CD4-positive, alpha-beta memory T cell (primary cell): ENCODE measurements at regions of chr5 and their contacts with region 1.

Region 1: DNA sequence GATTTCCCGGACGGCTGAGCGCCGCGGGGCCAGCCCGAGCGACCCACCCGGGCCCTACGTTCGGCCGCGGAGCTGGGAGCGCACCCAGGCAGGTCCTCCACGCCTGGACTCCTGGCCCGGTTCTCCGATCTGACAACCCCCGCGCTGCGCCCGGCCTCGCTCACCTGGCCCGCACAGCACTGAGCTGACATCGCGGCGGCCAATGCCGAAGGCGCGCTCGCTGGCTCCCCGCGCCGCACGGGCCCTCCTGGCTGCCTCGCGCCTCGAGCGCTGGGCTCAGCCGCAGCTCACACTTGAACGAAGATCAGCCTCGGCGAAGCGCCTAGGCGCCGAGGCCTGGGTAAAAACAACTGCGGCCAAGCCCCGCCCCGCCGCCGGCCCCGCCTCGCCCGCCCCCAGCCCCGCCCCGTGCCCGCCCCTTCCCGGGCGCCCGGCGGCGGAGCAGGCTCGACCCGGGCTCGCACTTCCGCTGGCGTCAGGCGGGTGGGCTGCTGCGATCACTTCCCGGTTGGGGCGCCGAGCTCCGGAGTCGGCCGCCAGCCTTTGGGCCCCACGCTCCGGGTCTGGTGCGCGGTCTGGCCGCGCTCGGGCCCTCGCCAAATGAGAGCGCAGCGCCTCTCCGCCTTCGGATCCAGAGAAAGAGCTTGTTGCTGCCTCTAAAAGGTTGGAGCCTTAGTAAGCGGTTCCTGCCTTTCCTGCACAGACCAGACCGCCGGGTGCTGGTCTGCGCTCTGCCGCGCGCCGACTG is at the start of gene SERINC5:
- DNase-seq: peak; percentile 82 to 88 (median 84)
- H3K4me3 ChIP-seq: peak within 1 kb of the TSS; percentile 73 to 80
- H3K4me3 Mint-ChIP-seq: peak within 1 kb of the TSS; percentile 92 to 100 (median 96)
- H3K27ac ChIP-seq: peak within 1 kb of the TSS; percentile 92
- H3K27ac Mint-ChIP-seq: peak within 1 kb of the TSS; percentile 88 to 99 (median 96)
- H3K4me1 ChIP-seq: peaks cover 40% of the 10 kb centered on the region
- H3K4me1 Mint-ChIP-seq: peaks cover 30 to 60% (median 50%) of the 10 kb centered on the region in 4 donors
- H3K27me3 ChIP-seq: no peaks in the 10 kb centered on the region
- H3K27me3 Mint-ChIP-seq: no peaks in the 10 kb centered on the region
- total RNA-seq, gene SERINC5: 153 to 165 TPM

Region 2: DNA sequence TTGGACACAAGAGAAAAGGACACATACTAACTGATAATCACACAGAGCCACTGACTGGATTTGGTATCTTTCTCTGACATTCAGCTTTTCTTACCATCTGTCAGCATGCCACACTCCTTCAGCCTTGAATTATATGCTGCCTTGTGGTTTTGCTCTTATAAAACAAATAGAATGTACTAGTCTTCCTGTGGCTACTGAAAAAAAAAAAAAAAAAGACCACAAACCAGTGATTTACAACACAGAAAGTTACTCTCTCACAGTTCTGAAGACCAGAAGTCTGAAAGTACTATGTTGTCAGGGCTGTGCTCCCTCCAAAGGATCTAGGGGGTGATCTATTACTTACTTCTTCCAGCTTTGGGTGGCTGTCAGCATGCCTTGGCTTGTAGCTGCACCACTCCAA is 138.5 kb before region 1 on chr5:
- CTCF ChIA-PET with region 1: no interaction called
- POLR2A ChIA-PET with region 1: interaction called, 32 read pairs
- intact Hi-C with region 1: no loop called
- DNase-seq: no peak
- H3K4me3 ChIP-seq: no peak overlapping the region
- H3K4me3 Mint-ChIP-seq: peak overlapping the region in 5 of 8 donors; percentile 25 to 76 (median 43)
- H3K27ac ChIP-seq: no peak overlapping the region
- H3K27ac Mint-ChIP-seq: peak overlapping the region in 5 of 7 donors; percentile 24 to 81 (median 65)
- H3K4me1 ChIP-seq: peaks cover 31% of the 10 kb centered on the region
- H3K4me1 Mint-ChIP-seq: peaks cover 47 to 62% (median 56%) of the 10 kb centered on the region in 4 donors
- H3K27me3 ChIP-seq: no peaks in the 10 kb centered on the region
- H3K27me3 Mint-ChIP-seq: no peaks in the 10 kb centered on the region

Region 3: DNA sequence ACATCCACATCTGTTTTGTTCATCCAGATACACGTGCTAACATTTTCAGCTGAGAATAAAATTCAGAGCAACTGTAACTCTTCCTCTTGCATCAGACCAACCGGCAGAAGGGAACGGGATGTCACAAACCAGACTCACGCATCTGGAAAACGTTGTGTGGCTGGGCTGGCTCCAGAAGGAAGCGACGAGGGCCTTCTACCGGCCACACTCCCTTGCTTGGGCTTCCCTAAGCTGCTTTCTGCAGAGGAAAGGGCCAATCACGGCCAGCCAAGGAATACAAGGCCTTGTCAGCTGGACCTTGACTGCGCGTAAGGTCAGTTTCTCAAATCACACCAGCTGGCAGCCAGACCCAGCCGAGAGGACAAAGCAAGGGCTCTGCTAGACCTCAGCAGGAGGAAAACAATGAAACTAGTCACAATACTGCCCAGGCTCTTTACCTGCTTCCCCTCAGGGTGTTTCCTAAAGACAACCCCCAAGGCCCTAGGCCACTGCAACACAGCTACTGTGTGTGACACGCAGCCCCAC is 114.7 kb before region 1 on chr5:
- CTCF ChIA-PET with region 1: interaction called, 13 read pairs
- POLR2A ChIA-PET with region 1: interaction called, 95 read pairs
- intact Hi-C with region 1: loop called (anchors 2 kb)
- DNase-seq: no peak
- H3K4me3 ChIP-seq: no peak overlapping the region
- H3K4me3 Mint-ChIP-seq: peak overlapping the region in 7 of 8 donors; percentile 18 to 82 (median 60)
- H3K27ac ChIP-seq: peak overlapping the region; percentile 37
- H3K27ac Mint-ChIP-seq: peak overlapping the region; percentile 89 to 96 (median 95)
- H3K4me1 ChIP-seq: peaks cover 86% of the 10 kb centered on the region
- H3K4me1 Mint-ChIP-seq: peaks cover 65 to 82% (median 75%) of the 10 kb centered on the region in 4 donors
- H3K27me3 ChIP-seq: no peaks in the 10 kb centered on the region
- H3K27me3 Mint-ChIP-seq: no peaks in the 10 kb centered on the region

Region 4: DNA sequence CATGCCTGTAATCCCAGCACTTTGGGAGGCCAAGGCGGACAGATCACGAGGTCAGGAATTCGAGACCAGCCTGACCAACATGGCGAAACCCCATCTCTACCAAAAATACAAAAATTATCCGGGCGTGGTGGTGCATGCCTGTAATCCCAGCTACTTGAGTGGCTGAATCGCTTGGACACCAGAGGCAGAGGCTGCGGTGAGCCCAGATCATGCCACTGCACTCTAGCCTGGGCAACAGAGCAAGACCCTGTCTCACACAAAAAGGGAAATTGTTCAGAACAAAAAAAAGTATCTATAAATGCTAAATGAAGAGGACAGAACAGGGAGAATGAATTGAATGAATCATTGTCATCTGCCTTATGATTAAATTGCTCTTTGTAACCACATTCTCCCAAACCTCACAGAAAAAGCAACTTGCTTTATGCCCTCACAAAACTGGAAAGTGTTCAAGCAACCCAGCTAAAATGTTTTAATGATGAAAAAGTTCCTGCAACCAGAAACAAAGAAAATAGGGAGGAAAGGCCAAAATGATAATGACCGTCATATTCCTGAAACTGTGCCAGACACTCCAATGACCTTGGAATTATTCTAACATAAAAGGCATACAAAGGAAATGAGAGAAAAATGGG is 83.7 kb before region 1 on chr5:
- CTCF ChIA-PET with region 1: interaction called, 3 read pairs
- POLR2A ChIA-PET with region 1: interaction called, 23 read pairs
- intact Hi-C with region 1: no loop called
- DNase-seq: no peak
- H3K4me3 ChIP-seq: no peak overlapping the region
- H3K4me3 Mint-ChIP-seq: no peak overlapping the region
- H3K27ac ChIP-seq: no peak overlapping the region
- H3K27ac Mint-ChIP-seq: peak overlapping the region in 5 of 7 donors; percentile 6 to 86 (median 48)
- H3K4me1 ChIP-seq: peaks cover 39% of the 10 kb centered on the region
- H3K4me1 Mint-ChIP-seq: peaks cover 20 to 62% (median 37%) of the 10 kb centered on the region in 4 donors
- H3K27me3 ChIP-seq: no peaks in the 10 kb centered on the region
- H3K27me3 Mint-ChIP-seq: no peaks in the 10 kb centered on the region

Region 5: DNA sequence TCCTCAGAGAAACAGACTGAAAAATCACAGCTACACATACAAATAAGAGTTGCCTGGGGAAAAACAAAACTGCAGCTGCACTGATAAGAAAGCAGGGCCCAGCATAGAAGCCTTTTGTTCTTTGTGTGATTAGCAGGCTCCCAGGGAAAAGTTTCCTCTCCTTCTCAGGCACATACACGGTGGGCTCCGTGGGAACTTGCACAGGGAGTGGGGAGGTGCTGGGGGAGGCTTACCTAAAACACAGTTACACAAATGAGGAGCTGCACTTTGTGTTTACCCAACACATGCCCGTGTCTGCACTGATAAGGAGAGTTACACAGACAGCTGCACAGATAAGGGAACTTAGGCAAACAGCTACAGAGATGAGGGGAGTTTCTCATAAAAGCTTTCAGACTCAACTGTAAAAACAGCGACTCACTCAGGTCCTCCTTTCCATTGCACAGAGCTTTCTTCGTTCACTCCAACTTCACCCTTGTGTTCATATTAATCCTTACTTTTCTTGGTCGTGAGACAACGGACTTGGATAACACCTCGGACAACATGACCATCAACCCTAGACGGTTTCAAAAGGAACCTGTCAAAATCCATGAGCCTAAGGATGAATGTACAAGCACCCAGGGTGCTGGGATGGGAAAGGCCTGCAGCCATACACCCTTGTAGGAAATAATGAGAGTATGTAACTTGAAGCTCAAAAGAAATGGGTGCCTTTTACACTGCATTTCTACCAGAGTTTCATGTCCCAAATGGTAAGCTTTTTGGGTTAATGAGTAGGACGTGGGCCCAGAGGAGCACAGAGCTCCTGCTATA is 50.9 kb before region 1 on chr5:
- CTCF ChIA-PET with region 1: interaction called, 6 read pairs
- POLR2A ChIA-PET with region 1: interaction called, 56 read pairs
- intact Hi-C with region 1: no loop called
- DNase-seq: no peak
- H3K4me3 ChIP-seq: no peak overlapping the region
- H3K4me3 Mint-ChIP-seq: peak overlapping the region; percentile 40 to 71 (median 58)
- H3K27ac ChIP-seq: peak overlapping the region; percentile 16
- H3K27ac Mint-ChIP-seq: peak overlapping the region; percentile 81 to 99 (median 88)
- H3K4me1 ChIP-seq: peaks cover 82% of the 10 kb centered on the region
- H3K4me1 Mint-ChIP-seq: peaks cover 72 to 94% (median 82%) of the 10 kb centered on the region in 4 donors
- H3K27me3 ChIP-seq: no peaks in the 10 kb centered on the region
- H3K27me3 Mint-ChIP-seq: no peaks in the 10 kb centered on the region

Region 6: GRCh38 chr5:80268916-80269315 is 13.0 kb after region 1 on chr5:
- CTCF ChIA-PET with region 1: interaction called, 13 read pairs
- POLR2A ChIA-PET with region 1: interaction called, 184 read pairs
- intact Hi-C with region 1: loop called (anchors 1 kb)
- DNase-seq: no peak
- H3K4me3 ChIP-seq: no peak overlapping the region
- H3K4me3 Mint-ChIP-seq: peak overlapping the region in 7 of 8 donors; percentile 36 to 87 (median 61)
- H3K27ac ChIP-seq: peak overlapping the region; percentile 9
- H3K27ac Mint-ChIP-seq: peak overlapping the region; percentile 77 to 99 (median 92)
- H3K4me1 ChIP-seq: peaks cover 34% of the 10 kb centered on the region
- H3K4me1 Mint-ChIP-seq: peaks cover 28 to 48% (median 39%) of the 10 kb centered on the region in 4 donors
- H3K27me3 ChIP-seq: no peaks in the 10 kb centered on the region
- H3K27me3 Mint-ChIP-seq: no peaks in the 10 kb centered on the region

Region 7: DNA sequence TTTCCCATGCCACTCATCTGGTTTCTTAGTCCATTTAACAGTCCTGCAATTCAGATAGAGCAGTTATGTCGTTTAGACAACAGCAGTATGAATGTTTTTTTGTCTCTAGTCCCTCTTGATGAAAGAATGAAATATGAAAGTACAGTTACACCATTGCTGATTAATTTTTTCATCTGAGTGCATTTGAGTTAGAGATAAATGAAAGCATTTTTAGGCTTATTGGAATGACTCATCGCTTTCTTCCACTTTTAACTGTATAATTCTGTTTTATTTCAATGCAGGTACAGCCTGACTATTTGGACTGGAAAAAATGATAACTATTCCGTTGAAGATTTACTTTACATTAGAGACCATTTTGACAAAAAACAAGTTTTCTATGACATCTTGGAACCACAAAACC is 285.5 kb after region 1 on chr5:
- CTCF ChIA-PET with region 1: no interaction called
- POLR2A ChIA-PET with region 1: no interaction called
- intact Hi-C with region 1: no loop called
- DNase-seq: no peak
- H3K4me3 ChIP-seq: no peak overlapping the region
- H3K4me3 Mint-ChIP-seq: no peak overlapping the region
- H3K27ac ChIP-seq: no peak overlapping the region
- H3K27ac Mint-ChIP-seq: no peak overlapping the region
- H3K4me1 ChIP-seq: no peaks in the 10 kb centered on the region
- H3K4me1 Mint-ChIP-seq: peaks cover 0 to 4% (median under 1%) of the 10 kb centered on the region in 4 donors
- H3K27me3 ChIP-seq: no peaks in the 10 kb centered on the region
- H3K27me3 Mint-ChIP-seq: no peaks in the 10 kb centered on the region